Activated B cell treated with CpG ODN at 0.5 μM for 24 hours (primary cell): ENCODE measurements at regions of chr5 and their contacts with region 1.

Region 1: DNA sequence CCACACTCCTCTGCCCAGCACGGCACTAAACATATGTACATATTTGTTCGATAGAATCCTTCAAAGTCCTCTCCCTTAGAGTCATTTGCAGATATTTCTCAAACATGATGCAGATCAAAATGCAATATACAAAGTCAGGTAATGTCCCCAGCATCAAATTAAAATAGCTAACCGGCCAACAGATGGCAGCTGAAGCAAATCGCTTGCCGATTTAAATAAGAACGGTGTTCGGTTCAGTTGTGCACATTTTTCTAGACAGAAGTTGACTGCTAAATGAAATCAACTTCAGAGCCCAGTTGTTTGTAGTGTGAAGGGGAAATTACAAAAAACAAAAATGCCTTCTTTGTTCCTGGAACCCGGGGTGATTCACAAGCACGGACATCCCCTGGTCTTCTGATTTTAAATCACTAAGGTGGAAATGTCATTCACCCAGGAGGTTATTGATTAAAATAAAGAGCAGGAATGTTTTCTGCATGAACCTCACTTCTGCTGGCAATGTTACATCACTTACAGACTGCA is 219.2 kb downstream of the EBF1 start:
- DNase-seq: no peak
- ATAC-seq: peak; percentile 28
- H3K4me3 Mint-ChIP-seq: peak overlapping the region; percentile 70
- H3K27ac Mint-ChIP-seq: peak overlapping the region; percentile 88
- H3K4me1 Mint-ChIP-seq: peaks cover 95% of the 10 kb centered on the region
- H3K27me3 Mint-ChIP-seq: no peaks in the 10 kb centered on the region
- CTCF ChIP-seq: no peak

Region 2: DNA sequence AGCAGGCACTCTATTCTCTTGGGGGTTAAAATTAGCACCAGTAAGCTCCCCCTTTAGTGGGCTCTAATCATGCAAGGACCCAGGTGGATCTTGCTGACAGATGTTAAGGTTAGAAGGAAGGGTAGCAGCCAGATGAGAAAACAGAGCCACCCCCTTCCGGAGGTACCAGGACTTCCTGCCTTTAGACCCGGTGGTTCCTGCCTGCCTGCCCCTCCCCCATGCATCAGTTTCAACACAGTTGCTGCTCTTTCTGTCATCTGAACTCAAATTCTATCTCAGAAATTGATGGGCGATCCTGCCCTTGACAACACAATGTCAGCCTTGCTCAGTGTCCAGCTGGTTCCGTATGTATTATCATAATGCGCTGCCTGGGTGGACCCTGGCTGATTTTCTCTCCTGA is 68.1 kb before region 1 on chr5:
- CTCF ChIA-PET with region 1: no interaction called
- POLR2A ChIA-PET with region 1: interaction called, 12 read pairs
- intact Hi-C with region 1: no loop called
- DNase-seq: peak; percentile 42
- ATAC-seq: peak; percentile 79
- H3K4me3 Mint-ChIP-seq: peak overlapping the region; percentile 55
- H3K27ac Mint-ChIP-seq: peak overlapping the region; percentile 89
- H3K4me1 Mint-ChIP-seq: peaks cover 99% of the 10 kb centered on the region
- H3K27me3 Mint-ChIP-seq: no peaks in the 10 kb centered on the region
- CTCF ChIP-seq: no peak